RWPE1 (cell line): ENCODE measurements at regions of chr9 and their contacts with region 1.

Region 1: DNA sequence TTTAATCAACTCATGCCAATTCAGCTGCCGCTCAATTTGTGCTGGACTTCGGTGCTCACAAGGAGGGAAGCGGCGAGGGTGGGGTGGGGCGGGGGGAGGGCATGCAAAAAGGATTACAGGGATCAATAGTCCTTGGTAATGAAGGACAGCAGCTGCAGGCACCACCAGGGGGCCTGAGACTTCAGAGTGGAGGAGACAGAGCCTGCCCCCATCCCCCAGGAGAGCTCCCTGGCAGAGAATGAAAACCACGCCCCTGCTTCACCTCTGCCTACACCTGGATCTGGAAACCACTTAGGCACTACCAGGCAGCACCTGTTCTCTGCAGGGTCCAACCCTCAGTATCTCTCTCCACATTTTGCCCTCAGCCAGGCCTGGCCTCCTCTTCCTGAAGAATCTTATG is 155.6 kb downstream of the TRIM32 start:
- DNase-seq: no peak
- H3K27ac ChIP-seq: peak overlapping the region; percentile 4; the same call in 1 of the 2 replicates
- CTCF ChIP-seq: no peak

Region 2: DNA sequence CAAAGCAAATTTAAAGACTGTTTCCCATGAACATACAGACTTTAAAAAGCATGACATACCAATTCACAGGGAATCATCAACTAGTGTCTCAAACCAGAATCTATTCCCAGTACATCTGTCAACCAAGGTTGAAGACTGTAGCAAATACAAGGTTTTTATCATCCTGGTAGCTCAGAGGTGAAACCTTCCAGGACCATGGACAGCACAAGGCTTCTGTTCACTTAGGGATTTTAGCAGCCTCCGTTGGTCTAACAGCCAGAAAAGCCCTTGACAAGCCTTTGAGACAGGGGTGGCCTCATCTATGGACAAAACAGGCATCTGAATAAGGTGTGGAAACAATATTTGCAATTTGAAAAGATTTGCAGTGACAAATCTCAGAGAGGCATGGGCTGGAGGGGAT is 36.6 kb before region 1 on chr9:
- CTCF ChIA-PET with region 1: interaction called, 3 read pairs
- POLR2A ChIA-PET with region 1: interaction called, 10 read pairs
- DNase-seq: peak; percentile 46
- H3K27ac ChIP-seq: no peak overlapping the region
- CTCF ChIP-seq: no peak